CD4-positive, alpha-beta T cell (primary cell): ENCODE measurements at regions of chr19 and their contacts with region 1.

Region 1: DNA sequence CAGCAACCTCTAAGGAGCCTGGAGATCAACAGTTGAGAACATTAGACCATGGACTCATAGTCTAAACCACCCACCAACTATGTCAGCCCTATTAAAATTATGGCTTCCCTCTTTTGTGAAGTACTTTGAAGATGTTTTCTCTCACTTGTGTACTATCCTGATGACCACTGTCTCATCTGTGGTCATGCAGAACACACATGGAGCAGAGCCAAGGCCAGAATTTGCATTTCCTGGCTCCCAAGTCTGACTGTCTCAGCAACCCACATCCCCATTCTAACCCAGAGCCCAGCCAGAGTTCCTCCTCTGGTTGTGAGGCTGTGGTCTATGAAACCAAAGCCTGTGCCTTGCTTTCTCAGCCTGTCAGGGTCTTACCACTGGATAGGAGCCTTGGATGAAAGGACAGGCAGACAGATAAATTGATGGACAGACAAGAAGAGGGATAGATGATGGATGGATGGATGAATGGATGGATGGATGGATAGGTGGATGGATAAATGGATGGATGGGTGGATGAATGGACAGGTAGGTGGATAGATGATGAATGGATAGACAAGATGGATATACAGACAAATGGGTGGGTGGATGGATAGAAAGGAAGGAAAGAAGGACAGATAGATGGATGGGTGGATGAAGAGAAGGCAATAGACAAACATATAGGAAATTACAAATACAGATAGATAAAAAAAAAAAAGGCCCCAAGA is 35.4 kb downstream of the ZNF557 start:
- DNase-seq: peak in 1 of 14 experiments; percentile 10
- ATAC-seq: no peak
- H3K4me3 ChIP-seq: no peak overlapping the region
- H3K4me3 Mint-ChIP-seq: no peak overlapping the region
- H3K27ac ChIP-seq: no peak overlapping the region
- H3K27ac Mint-ChIP-seq: no peak overlapping the region
- H3K4me1 ChIP-seq: peaks cover 10% of the 10 kb centered on the region
- H3K4me1 Mint-ChIP-seq: peaks cover 22% of the 10 kb centered on the region
- H3K27me3 ChIP-seq: no peaks in the 10 kb centered on the region
- H3K27me3 Mint-ChIP-seq: no peaks in the 10 kb centered on the region
- CTCF ChIP-seq: no peak

Region 2: DNA sequence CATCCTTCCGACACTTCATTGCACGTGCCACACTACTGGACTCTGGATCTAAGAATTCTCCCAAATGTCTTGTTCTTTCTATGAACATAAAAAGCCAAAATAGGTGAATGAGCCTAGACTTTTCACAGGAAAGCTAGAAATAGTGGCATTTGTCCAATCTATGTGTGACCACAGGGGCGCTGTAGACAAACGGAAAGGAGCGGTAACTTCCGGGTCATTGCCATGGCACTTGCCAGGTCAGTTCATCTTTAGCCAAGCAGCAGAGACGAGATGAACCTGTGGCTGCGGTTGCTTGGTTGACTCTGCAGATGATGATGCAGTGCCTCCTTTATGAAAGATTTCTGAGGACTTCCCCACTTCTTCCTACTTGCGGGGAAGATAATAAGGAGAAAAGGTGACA is 151.9 kb before region 1 on chr19:
- CTCF ChIA-PET with region 1: no interaction called
- POLR2A ChIA-PET with region 1: no interaction called
- intact Hi-C with region 1: no loop called
- DNase-seq: no peak
- ATAC-seq: no peak
- H3K4me3 ChIP-seq: no peak overlapping the region
- H3K4me3 Mint-ChIP-seq: no peak overlapping the region
- H3K27ac ChIP-seq: no peak overlapping the region
- H3K27ac Mint-ChIP-seq: no peak overlapping the region
- H3K4me1 ChIP-seq: no peaks in the 10 kb centered on the region
- H3K4me1 Mint-ChIP-seq: peaks cover 4% of the 10 kb centered on the region
- H3K27me3 ChIP-seq: no peaks in the 10 kb centered on the region
- H3K27me3 Mint-ChIP-seq: peaks cover 8% of the 10 kb centered on the region
- CTCF ChIP-seq: no peak

Region 3: GRCh38 chr19:7177926-7178325 is 73.0 kb after region 1 on chr19:
- CTCF ChIA-PET with region 1: no interaction called
- POLR2A ChIA-PET with region 1: no interaction called
- intact Hi-C with region 1: no loop called
- DNase-seq: no peak
- ATAC-seq: no peak
- H3K4me3 ChIP-seq: no peak overlapping the region
- H3K4me3 Mint-ChIP-seq: no peak overlapping the region
- H3K27ac ChIP-seq: no peak overlapping the region
- H3K27ac Mint-ChIP-seq: no peak overlapping the region
- H3K4me1 ChIP-seq: peaks cover 8% of the 10 kb centered on the region
- H3K4me1 Mint-ChIP-seq: peaks cover 7% of the 10 kb centered on the region
- H3K27me3 ChIP-seq: no peaks in the 10 kb centered on the region
- H3K27me3 Mint-ChIP-seq: no peaks in the 10 kb centered on the region
- CTCF ChIP-seq: no peak

Region 4: GRCh38 chr19:7382694-7383093 is 277.8 kb after region 1 on chr19:
- CTCF ChIA-PET with region 1: interaction called, 7 read pairs
- POLR2A ChIA-PET with region 1: no interaction called
- intact Hi-C with region 1: loop called (anchors 1 to 5 kb)
- DNase-seq: no peak
- ATAC-seq: no peak
- H3K4me3 ChIP-seq: no peak overlapping the region
- H3K4me3 Mint-ChIP-seq: no peak overlapping the region
- H3K27ac ChIP-seq: no peak overlapping the region
- H3K27ac Mint-ChIP-seq: no peak overlapping the region
- H3K4me1 ChIP-seq: peaks cover 49% of the 10 kb centered on the region
- H3K4me1 Mint-ChIP-seq: peaks cover 29% of the 10 kb centered on the region
- H3K27me3 ChIP-seq: no peaks in the 10 kb centered on the region
- H3K27me3 Mint-ChIP-seq: no peaks in the 10 kb centered on the region
- CTCF ChIP-seq: no peak

Region 5: GRCh38 chr19:7450243-7451223 is 345.6 kb after region 1 on chr19:
- CTCF ChIA-PET with region 1: no interaction called
- POLR2A ChIA-PET with region 1: no interaction called
- intact Hi-C with region 1: no loop called
- DNase-seq: peak in 3 of 14 experiments; percentile 28 to 63 (median 45)
- ATAC-seq: no peak
- H3K4me3 ChIP-seq: no peak overlapping the region
- H3K4me3 Mint-ChIP-seq: no peak overlapping the region
- H3K27ac ChIP-seq: no peak overlapping the region
- H3K27ac Mint-ChIP-seq: no peak overlapping the region
- H3K4me1 ChIP-seq: peaks cover 16% of the 10 kb centered on the region
- H3K4me1 Mint-ChIP-seq: peaks cover 22% of the 10 kb centered on the region
- H3K27me3 ChIP-seq: no peaks in the 10 kb centered on the region
- H3K27me3 Mint-ChIP-seq: no peaks in the 10 kb centered on the region
- CTCF ChIP-seq: no peak

Region 6: GRCh38 chr19:7506385-7507328 is 401.8 kb after region 1 on chr19:
- CTCF ChIA-PET with region 1: no interaction called
- POLR2A ChIA-PET with region 1: no interaction called
- intact Hi-C with region 1: no loop called
- DNase-seq: peak in 6 of 14 experiments; percentile 15 to 76 (median 31)
- ATAC-seq: peak; percentile 63
- H3K4me3 ChIP-seq: no peak overlapping the region
- H3K4me3 Mint-ChIP-seq: no peak overlapping the region
- H3K27ac ChIP-seq: no peak overlapping the region
- H3K27ac Mint-ChIP-seq: no peak overlapping the region
- H3K4me1 ChIP-seq: peaks cover 19% of the 10 kb centered on the region
- H3K4me1 Mint-ChIP-seq: peaks cover 16% of the 10 kb centered on the region
- H3K27me3 ChIP-seq: peaks cover 24 to 25% of the 10 kb centered on the region in 2 experiments
- H3K27me3 Mint-ChIP-seq: peaks cover 54% of the 10 kb centered on the region
- CTCF ChIP-seq: no peak